K562 (cell line): ENCODE measurements at regions of chr14 and their contacts with region 1.

Region 1: DNA sequence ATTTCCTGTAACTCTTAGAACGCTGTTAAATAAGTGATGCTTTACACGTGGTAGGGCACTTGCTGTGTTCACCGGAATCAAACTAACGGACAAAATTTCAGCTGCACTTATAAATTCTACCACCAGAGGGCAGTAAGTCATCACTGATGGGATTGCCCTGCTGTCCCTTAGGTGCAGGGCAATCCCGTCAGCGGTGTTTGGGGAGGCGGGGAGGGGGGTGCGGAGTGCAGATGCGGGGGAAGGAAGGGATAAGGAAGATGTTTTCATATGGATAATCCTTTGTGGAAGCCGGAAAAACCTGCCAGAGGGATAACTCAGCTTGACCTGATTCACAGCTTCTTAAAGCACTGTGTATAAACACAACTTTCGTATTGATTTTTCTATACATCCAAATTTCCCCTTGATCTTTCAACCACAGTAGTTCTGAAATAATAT is 21.7 kb upstream of the SLC10A1 start:
- DNase-seq: peak; percentile 62 to 72 (median 72)
- ATAC-seq: peak; percentile 92
- H3K4me3 ChIP-seq: no peak overlapping the region
- H3K27ac ChIP-seq: no peak overlapping the region
- H3K4me1 ChIP-seq: no peaks in the 10 kb centered on the region
- H3K27me3 ChIP-seq: peaks cover 3 to 34% of the 10 kb centered on the region in 2 experiments; a peak in 3 of 5 replicates
- CTCF ChIP-seq: peak; percentile 65 to 85 (median 77)
- EP300 ChIP-seq: no peak
- POLR2A ChIP-seq: no peak
- RAD21 ChIP-seq: peak; percentile 61 to 83

Region 2: DNA sequence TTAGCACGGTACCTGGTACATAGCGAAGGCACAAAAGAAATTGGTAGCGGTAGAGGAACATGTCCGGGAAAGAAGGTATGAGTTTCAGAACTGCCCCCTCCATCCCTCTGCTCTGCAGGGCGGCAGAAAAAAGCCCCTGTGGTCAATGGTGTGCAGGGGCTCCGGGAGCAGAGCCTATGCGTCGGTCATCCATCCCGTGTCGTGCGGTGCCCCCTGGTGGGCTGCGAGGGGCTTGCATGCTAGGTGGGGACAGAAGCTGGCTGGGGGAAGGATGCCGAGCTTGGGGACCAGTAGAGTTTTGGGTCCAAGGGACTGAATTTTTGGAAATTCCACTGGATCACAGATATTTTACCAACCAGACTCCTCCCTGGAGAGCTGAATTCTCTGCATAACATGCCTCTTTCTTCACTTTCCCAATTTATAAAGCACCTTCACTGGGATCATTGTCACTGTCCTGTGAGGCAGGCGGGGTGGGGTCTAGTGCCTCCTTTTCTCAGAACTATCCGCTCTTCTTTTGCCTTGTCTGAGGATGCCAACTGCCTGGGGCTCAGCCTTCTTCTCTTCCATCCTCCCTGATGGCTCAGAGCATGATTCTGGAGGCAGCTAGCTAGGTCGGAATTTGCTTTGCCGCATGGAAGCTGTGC is 209.1 kb after region 1 on chr14:
- CTCF ChIA-PET with region 1: interaction called, 10 read pairs
- POLR2A ChIA-PET with region 1: no interaction called
- in situ Hi-C with region 1: loop called (anchors 10 kb)
- intact Hi-C with region 1: loop called (anchors 2 kb)
- DNase-seq: peak; percentile 60 to 80 (median 76)
- ATAC-seq: peak; percentile 92
- H3K4me3 ChIP-seq: no peak overlapping the region
- H3K27ac ChIP-seq: no peak overlapping the region
- H3K4me1 ChIP-seq: no peaks in the 10 kb centered on the region
- H3K27me3 ChIP-seq: peaks cover 0 to 13% of the 10 kb centered on the region in 2 experiments; a peak in 1 of 5 replicates
- CTCF ChIP-seq: peak; percentile 75 to 80 (median 77)
- EP300 ChIP-seq: no peak
- POLR2A ChIP-seq: no peak
- RAD21 ChIP-seq: peak; percentile 68 to 82

Region 3: DNA sequence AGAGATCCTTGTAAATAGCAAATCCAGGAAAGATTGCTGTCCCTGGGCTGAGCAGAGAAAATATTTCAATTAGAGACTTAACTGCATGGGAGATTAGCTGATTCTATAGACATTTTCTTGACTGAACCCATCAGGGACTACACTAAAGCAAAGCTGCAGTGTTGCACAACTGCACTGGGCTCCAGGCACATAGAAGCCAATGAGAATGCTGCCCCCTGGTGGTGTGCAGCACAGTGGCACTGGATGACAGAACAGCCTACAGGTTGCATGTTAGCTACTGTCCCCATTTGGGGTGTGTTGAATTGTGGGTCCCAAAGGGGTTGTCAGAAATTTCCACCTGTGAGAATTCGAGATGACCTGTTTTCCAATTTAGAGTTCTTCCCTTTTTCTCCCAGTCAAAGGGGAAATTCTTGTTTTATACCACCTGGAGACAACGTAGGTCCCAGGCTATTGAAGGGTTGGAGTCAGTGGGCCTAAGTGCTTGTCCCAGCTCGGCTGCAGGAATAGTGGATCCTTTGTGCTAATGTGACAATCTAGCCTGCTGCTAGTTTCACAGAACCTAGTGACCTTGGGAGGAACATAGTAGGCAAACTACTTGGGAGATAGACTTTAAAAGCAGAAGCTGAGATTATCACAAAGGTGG is 255.3 kb after region 1 on chr14:
- CTCF ChIA-PET with region 1: interaction called, 8 read pairs
- POLR2A ChIA-PET with region 1: no interaction called
- in situ Hi-C with region 1: no loop called
- intact Hi-C with region 1: loop called (anchors 1 kb)
- DNase-seq: peak; percentile 59 to 68 (median 66)
- ATAC-seq: peak; percentile 92
- H3K4me3 ChIP-seq: no peak overlapping the region
- H3K27ac ChIP-seq: no peak overlapping the region
- H3K4me1 ChIP-seq: no peaks in the 10 kb centered on the region
- H3K27me3 ChIP-seq: no peaks in the 10 kb centered on the region
- CTCF ChIP-seq: peak; percentile 64 to 76 (median 69)
- EP300 ChIP-seq: no peak
- POLR2A ChIP-seq: no peak
- RAD21 ChIP-seq: peak; percentile 37 to 64; a peak in 3 of 4 replicates

Region 4: GRCh38 chr14:70317969-70318634 is 499.3 kb after region 1 on chr14:
- CTCF ChIA-PET with region 1: interaction called, 11 read pairs
- POLR2A ChIA-PET with region 1: no interaction called
- in situ Hi-C with region 1: loop called (anchors 5 kb)
- intact Hi-C with region 1: loop called (anchors 1 kb)
- DNase-seq: peak in 2 of 4 experiments; percentile 14 to 46
- ATAC-seq: peak; percentile 80
- H3K4me3 ChIP-seq: no peak overlapping the region
- H3K27ac ChIP-seq: no peak overlapping the region
- H3K4me1 ChIP-seq: no peaks in the 10 kb centered on the region
- H3K27me3 ChIP-seq: no peaks in the 10 kb centered on the region
- CTCF ChIP-seq: peak; percentile 43 to 60 (median 51)
- EP300 ChIP-seq: no peak
- POLR2A ChIP-seq: no peak
- RAD21 ChIP-seq: peak; percentile 46 to 71